Esophagus muscularis mucosa (tissue), 4 donors: ENCODE measurements at regions of chr4 and their contacts with region 1.

Region 1: GRCh38 chr4:88284439-88285234 is at the start of gene PPM1K:
- DNase-seq: peak; percentile 100
- H3K4me3 ChIP-seq: peak within 1 kb of the TSS; percentile 75 to 96 (median 82)
- H3K27ac ChIP-seq: peak within 1 kb of the TSS; percentile 97 to 100 (median 99)
- H3K4me1 ChIP-seq: peaks cover 22 to 55% (median 46%) of the 10 kb centered on the region in 4 donors
- H3K27me3 ChIP-seq: no peaks in the 10 kb centered on the region
- CTCF ChIP-seq: peak; percentile 14 to 29 (median 19)
- EP300 ChIP-seq: no peak
- POLR2A ChIP-seq: peak; percentile 27
- total RNA-seq, gene PPM1K: 35.7 to 54.2 (median 38.3) TPM

Region 2: DNA sequence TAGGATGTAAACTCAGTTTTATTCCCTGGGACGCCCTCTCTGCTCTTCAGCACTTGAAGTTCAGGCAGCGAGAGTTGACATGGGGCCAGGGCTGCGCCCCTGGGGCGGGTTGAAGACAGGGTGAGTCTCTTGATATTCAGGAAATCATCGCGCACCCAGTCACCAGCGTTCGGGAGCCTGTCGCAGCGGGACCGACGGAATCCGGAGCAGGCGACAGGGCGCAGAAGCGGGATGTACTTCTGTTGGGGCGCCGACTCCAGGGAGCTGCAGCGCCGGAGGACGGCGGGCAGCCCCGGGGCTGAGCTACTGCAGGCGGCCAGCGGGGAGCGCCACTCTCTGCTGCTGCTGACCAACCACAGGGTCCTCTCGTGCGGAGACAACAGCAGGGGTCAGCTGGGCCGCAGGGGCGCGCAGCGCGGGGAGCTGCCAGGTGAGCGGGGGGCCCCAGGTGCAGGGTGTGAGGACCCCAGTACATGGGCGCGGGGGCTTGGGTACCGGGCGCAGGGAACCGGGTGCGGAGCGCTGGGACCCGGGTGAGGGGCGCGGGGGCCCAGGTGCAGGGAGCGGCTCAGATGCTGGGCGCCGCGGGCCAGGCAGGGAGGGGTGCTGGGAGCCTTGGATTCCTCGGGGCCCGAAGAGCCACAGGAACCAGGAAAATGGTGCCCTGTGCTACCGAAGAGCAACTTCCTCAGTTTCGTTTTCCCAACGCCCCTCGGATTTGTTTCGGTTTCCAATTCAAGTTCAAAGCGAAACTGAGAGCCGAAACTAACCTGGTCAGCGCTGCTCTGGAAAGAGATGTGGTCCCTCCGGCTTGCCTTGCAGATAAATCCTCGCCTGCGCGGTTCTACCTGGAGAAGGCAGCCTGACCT is 94.3 kb after region 1 on chr4 and contains the start of gene HERC6:
- intact Hi-C with region 1: loop called (anchors 5 kb)
- DNase-seq: no peak
- H3K4me3 ChIP-seq: peak within 1 kb of the TSS; percentile 76 to 100 (median 86)
- H3K27ac ChIP-seq: peak within 1 kb of the TSS; percentile 82 to 94 (median 87)
- H3K4me1 ChIP-seq: peaks cover 0 to 10% (median 5%) of the 10 kb centered on the region in 4 donors
- H3K27me3 ChIP-seq: no peaks in the 10 kb centered on the region
- CTCF ChIP-seq: peak; percentile 58 to 80 (median 66)
- EP300 ChIP-seq: no peak
- POLR2A ChIP-seq: no peak
- total RNA-seq, gene HERC6: 3.8 to 5.2 (median 4.9) TPM

Region 3: GRCh38 chr4:88411473-88412096 is 126.9 kb after region 1 on chr4:
- intact Hi-C with region 1: no loop called
- DNase-seq: no peak
- H3K4me3 ChIP-seq: no peak overlapping the region
- H3K27ac ChIP-seq: no peak overlapping the region
- H3K4me1 ChIP-seq: no peaks in the 10 kb centered on the region
- H3K27me3 ChIP-seq: no peaks in the 10 kb centered on the region
- CTCF ChIP-seq: no peak
- EP300 ChIP-seq: no peak
- POLR2A ChIP-seq: no peak